ENCODE measurements at regions of chr14 and their contacts with region 1.

Region 1: GRCh38 chr14:99758121-99758821 is 34.9 kb upstream of the EML1 start:
- DNase-seq: no peak
- H3K4me3 ChIP-seq: no peak overlapping the region
- H3K27ac ChIP-seq: no peak overlapping the region
- H3K4me1 ChIP-seq: peaks cover 6% of the 10 kb centered on the region
- H3K27me3 ChIP-seq: no peaks in the 10 kb centered on the region
- CTCF ChIP-seq: no peak
- EP300 ChIP-seq: no peak
- POLR2A ChIP-seq: no peak

Region 2: DNA sequence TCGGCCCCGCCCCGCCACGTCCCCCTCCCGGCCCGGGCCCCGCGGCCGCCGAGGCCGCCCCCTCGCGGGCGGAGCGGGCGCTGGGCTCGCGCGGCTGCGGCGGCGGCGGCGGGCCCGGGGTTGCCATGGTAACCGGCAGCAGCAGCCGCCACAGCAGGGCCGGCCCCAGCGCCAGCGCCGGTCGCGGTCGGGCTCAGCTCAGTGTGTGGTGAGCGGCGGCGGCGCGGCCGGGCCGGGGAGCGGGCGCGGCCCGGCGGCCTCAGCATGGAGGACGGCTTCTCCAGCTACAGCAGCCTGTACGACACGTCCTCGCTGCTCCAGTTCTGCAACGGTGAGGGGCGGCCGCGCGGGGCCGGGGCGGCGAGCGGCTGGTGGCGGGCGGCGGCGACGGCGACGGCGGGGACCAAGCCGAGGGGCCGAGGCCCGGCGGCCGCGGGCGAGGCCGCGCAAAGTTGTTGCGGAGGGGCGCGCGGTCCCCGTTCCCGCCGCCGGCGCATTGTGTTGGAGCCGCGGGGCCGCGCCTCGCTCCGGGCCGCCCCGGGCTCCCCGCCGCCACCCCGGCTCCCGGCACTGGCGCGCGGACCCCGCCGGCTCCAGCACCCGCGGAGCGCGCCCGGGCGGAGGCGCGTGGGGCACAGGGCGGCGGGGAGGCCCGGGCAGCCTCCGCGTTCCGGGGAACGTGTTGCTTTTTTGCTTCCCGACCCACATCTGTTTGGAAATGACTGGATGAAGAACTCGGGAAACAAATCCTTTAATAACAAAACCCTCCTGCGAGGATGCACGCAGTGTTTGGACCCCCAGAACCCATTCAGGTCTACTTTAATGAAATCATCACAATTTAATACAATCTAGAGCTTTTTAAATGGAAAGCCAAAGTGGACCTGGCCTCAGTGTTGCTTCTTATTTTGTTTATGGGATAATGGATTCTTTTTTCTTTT is 35.2 kb after region 1 on chr14 and contains the start of gene EML1:
- intact Hi-C with region 1: loop called in 1 of 4 experiments (anchors 2 kb)
- DNase-seq: peak; percentile 84 to 90 (median 87)
- H3K4me3 ChIP-seq: peak within 1 kb of the TSS; percentile 68
- H3K27ac ChIP-seq: peak within 1 kb of the TSS; percentile 80 to 89
- H3K4me1 ChIP-seq: peaks cover 4% of the 10 kb centered on the region
- H3K27me3 ChIP-seq: no peaks in the 10 kb centered on the region
- CTCF ChIP-seq: no peak
- EP300 ChIP-seq: no peak
- POLR2A ChIP-seq: no peak
- total RNA-seq, gene EML1: 4.4 to 22.3 (median 9.8) TPM

Region 3: GRCh38 chr14:99930420-99931274 is 172.4 kb after region 1 on chr14:
- intact Hi-C with region 1: no loop called
- DNase-seq: no peak
- H3K4me3 ChIP-seq: no peak overlapping the region
- H3K27ac ChIP-seq: no peak overlapping the region
- H3K4me1 ChIP-seq: no peaks in the 10 kb centered on the region
- H3K27me3 ChIP-seq: no peaks in the 10 kb centered on the region
- CTCF ChIP-seq: no peak
- EP300 ChIP-seq: no peak
- POLR2A ChIP-seq: no peak

Region 4: GRCh38 chr14:100025111-100025510 is 266.8 kb after region 1 on chr14:
- intact Hi-C with region 1: no loop called
- DNase-seq: no peak
- H3K4me3 ChIP-seq: no peak overlapping the region
- H3K27ac ChIP-seq: no peak overlapping the region
- H3K4me1 ChIP-seq: peaks cover 26% of the 10 kb centered on the region
- H3K27me3 ChIP-seq: no peaks in the 10 kb centered on the region
- CTCF ChIP-seq: no peak
- EP300 ChIP-seq: no peak
- POLR2A ChIP-seq: no peak